Thyroid gland (tissue), 4 donors: ENCODE measurements at regions of chr16 and their contacts with region 1.

Region 1: GRCh38 chr16:21708533-21709115 is 44.9 kb downstream of the OTOA start:
- DNase-seq: peak; percentile 72 to 77
- H3K4me3 ChIP-seq: no peak overlapping the region
- H3K27ac ChIP-seq: no peak overlapping the region
- H3K4me1 ChIP-seq: no peaks in the 10 kb centered on the region
- H3K27me3 ChIP-seq: no peaks in the 10 kb centered on the region
- CTCF ChIP-seq: peak; percentile 31 to 78 (median 68)
- POLR2A ChIP-seq: no peak

Region 2: DNA sequence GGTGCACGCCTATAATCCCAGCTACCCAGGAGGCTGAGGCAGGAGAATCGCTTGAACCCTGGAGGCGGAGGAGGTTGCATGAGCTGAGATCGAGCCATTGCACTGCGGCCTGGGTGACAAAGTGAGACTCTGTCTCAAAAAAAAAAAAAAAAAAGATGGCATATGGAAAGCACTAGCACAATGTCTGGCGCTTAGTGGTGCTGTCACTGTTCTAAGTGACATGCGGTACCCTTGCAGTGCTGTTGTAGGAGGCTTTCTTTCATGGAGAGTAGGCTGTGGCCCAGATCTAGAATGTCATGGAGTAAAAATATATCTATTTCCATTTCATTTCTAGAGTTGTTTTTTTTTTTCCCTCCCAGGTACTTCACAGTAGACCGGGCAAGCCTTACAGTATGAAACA is 123.8 kb before region 1 on chr16:
- intact Hi-C with region 1: loop called (anchors 5 kb)
- DNase-seq: no peak
- H3K4me3 ChIP-seq: no peak overlapping the region
- H3K27ac ChIP-seq: peak overlapping the region in 1 of 3 donors; percentile 46
- H3K4me1 ChIP-seq: peaks cover 4 to 7% of the 10 kb centered on the region in 2 donors
- H3K27me3 ChIP-seq: no peaks in the 10 kb centered on the region
- CTCF ChIP-seq: no peak
- POLR2A ChIP-seq: no peak

Region 3: GRCh38 chr16:21626659-21627277 is 81.9 kb before region 1 on chr16:
- intact Hi-C with region 1: no loop called
- DNase-seq: no peak
- H3K4me3 ChIP-seq: no peak overlapping the region
- H3K27ac ChIP-seq: no peak overlapping the region
- H3K4me1 ChIP-seq: peaks cover 10 to 11% of the 10 kb centered on the region in 2 donors
- H3K27me3 ChIP-seq: no peaks in the 10 kb centered on the region
- CTCF ChIP-seq: no peak
- POLR2A ChIP-seq: no peak

Region 4: GRCh38 chr16:21656795-21657768 is 51.5 kb before region 1 on chr16:
- intact Hi-C with region 1: loop called (anchors 5 kb)
- DNase-seq: peak; percentile 17 to 19
- H3K4me3 ChIP-seq: no peak overlapping the region
- H3K27ac ChIP-seq: no peak overlapping the region
- H3K4me1 ChIP-seq: no peaks in the 10 kb centered on the region
- H3K27me3 ChIP-seq: no peaks in the 10 kb centered on the region
- CTCF ChIP-seq: peak; percentile 46 to 86 (median 74)
- POLR2A ChIP-seq: no peak